Heart left ventricle (tissue), 16 donors: ENCODE measurements at regions of chr2 and their contacts with region 1.

Region 1: GRCh38 chr2:119517433-119517832 is 6.8 kb downstream of the SCTR start:
- DNase-seq: peak; percentile 34 to 71 (median 51)
- ATAC-seq: peak in 3 of 4 donors; percentile 72 to 82 (median 79)
- H3K4me3 ChIP-seq: no peak overlapping the region
- H3K27ac ChIP-seq: no peak overlapping the region
- H3K4me1 ChIP-seq: no peaks in the 10 kb centered on the region
- H3K27me3 ChIP-seq: peaks cover 0 to 12% (median 3%) of the 10 kb centered on the region in 9 donors
- CTCF ChIP-seq: peak; percentile 35 to 63 (median 54)
- POLR2A ChIP-seq: no peak

Region 2: GRCh38 chr2:119338826-119339561 is 178.4 kb before region 1 on chr2:
- intact Hi-C with region 1: no loop called
- DNase-seq: peak in 2 of 5 donors; percentile 30 to 44
- ATAC-seq: peak; percentile 53 to 84 (median 68)
- H3K4me3 ChIP-seq: no peak overlapping the region
- H3K27ac ChIP-seq: peak overlapping the region in 2 of 12 donors; percentile 1 to 16
- H3K4me1 ChIP-seq: peaks cover 0 to 14% (median 0%) of the 10 kb centered on the region in 12 donors
- H3K27me3 ChIP-seq: no peaks in the 10 kb centered on the region
- CTCF ChIP-seq: no peak
- POLR2A ChIP-seq: no peak

Region 3: GRCh38 chr2:119659601-119660342 is 142.3 kb after region 1 on chr2:
- intact Hi-C with region 1: loop called in 6 of 10 experiments (anchors 2 to 10 kb)
- DNase-seq: peak in 2 of 5 donors; percentile 25 to 43
- ATAC-seq: peak in 2 of 4 donors; percentile 36 to 43
- H3K4me3 ChIP-seq: no peak overlapping the region
- H3K27ac ChIP-seq: no peak overlapping the region
- H3K4me1 ChIP-seq: peaks cover 0 to 7% (median 0%) of the 10 kb centered on the region in 12 donors
- H3K27me3 ChIP-seq: no peaks in the 10 kb centered on the region
- CTCF ChIP-seq: peak; percentile 76 to 89 (median 83)
- POLR2A ChIP-seq: no peak

Region 4: GRCh38 chr2:119820275-119820674 is 302.8 kb after region 1 on chr2:
- intact Hi-C with region 1: no loop called
- DNase-seq: peak in 2 of 5 donors; percentile 55 to 67
- ATAC-seq: peak in 3 of 4 donors; percentile 24 to 82 (median 71)
- H3K4me3 ChIP-seq: no peak overlapping the region
- H3K27ac ChIP-seq: peak overlapping the region in 4 of 12 donors; percentile 11 to 61 (median 25)
- H3K4me1 ChIP-seq: peaks cover 0 to 21% (median 6%) of the 10 kb centered on the region in 12 donors
- H3K27me3 ChIP-seq: no peaks in the 10 kb centered on the region
- CTCF ChIP-seq: no peak
- POLR2A ChIP-seq: no peak